PC-3 (cell line): ENCODE measurements at regions of chr4 and their contacts with region 1.

Region 1: DNA sequence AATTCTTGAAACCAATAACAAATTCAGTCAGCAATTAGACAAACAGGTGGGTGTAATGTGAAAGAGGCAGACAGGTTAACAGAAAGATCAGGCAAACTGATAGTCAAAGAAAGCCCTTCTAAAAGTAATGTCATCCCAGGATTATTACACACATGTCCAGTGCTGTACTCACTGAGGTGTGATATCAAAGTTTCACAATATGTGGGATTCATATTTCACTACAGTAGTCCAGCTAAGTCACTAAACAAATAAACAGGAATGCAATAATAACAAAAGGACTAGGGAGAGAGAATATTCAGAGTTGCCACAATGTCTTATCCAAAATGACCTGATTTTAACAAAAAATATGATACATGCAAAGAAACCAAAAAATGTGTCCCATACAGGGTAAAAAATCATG is 787.5 kb downstream of the FSTL5 start:
- DNase-seq: peak; percentile 29
- ATAC-seq: peak; percentile 71
- H3K4me3 ChIP-seq: no peak overlapping the region
- H3K27ac ChIP-seq: no peak overlapping the region
- H3K4me1 ChIP-seq: no peaks in the 10 kb centered on the region
- H3K27me3 ChIP-seq: no peaks in the 10 kb centered on the region
- CTCF ChIP-seq: no peak

Region 2: GRCh38 chr4:163107754-163108153 is 1731.5 kb after region 1 on chr4:
- CTCF ChIA-PET with region 1: no interaction called
- POLR2A ChIA-PET with region 1: no interaction called
- intact Hi-C with region 1: loop called (anchors 5 kb)
- DNase-seq: peak; percentile 30
- ATAC-seq: no peak
- H3K4me3 ChIP-seq: no peak overlapping the region
- H3K27ac ChIP-seq: no peak overlapping the region
- H3K4me1 ChIP-seq: no peaks in the 10 kb centered on the region
- H3K27me3 ChIP-seq: no peaks in the 10 kb centered on the region
- CTCF ChIP-seq: peak; percentile 48